ENCODE measurements at regions of chr11 and their contacts with region 1.

Region 1: GRCh38 chr11:122020902-122021301 is 95.1 kb downstream of the BLID start:
- DNase-seq: peak in 1 of 10 donors; percentile 18

Region 2: GRCh38 chr11:121917482-121917881 is 103.4 kb before region 1 on chr11:
- intact Hi-C with region 1: no loop called
- DNase-seq: no peak

Region 3: GRCh38 chr11:122202951-122203456 is 182.1 kb after region 1 on chr11:
- intact Hi-C with region 1: loop called (anchors 5 kb)
- DNase-seq: peak; percentile 64 to 97 (median 79)

Measured in posterior cingulate gyrus (tissue), 11 donors.